A673 (cell line): ENCODE measurements at regions of chr3 and their contacts with region 1.

Region 1: DNA sequence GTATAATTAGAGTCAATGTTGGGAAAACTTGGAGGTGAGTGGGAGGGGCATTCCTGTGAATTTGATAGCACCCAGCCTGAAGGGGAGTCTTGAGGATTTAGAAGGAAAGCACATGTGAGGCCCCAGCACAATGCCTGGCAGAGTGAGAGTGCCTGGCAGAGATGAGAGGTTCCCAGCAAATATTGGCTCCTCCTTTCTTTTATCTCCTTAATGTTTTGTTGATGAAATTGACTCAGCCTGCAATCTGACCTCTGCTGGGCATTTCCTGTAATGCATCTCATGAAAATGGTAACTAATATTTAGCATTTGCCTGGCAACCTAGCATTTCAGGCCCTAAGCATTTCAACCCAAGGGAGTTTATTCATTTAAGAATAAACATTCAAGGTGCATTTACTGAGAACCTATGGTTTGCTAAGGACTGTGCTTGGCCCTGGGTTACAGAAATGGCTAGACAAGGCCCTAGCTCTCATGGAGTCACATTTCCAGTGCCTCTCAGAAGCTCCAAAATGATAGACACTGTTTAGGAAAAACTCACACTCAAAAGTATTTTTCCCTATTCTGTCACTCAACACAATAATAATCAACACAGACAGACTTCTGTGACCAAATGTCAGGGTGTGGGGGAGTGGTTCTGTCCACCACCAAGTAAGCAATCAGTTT is 19.0 kb downstream of the PDHB start:
- DNase-seq: peak; percentile 63
- H3K4me3 ChIP-seq: no peak overlapping the region
- H3K27ac ChIP-seq: no peak overlapping the region
- H3K4me1 ChIP-seq: peaks cover 5% of the 10 kb centered on the region
- H3K27me3 ChIP-seq: no peaks in the 10 kb centered on the region
- CTCF ChIP-seq: peak; percentile 61

Region 2: GRCh38 chr3:58321791-58322190 is 92.9 kb before region 1 on chr3:
- CTCF ChIA-PET with region 1: no interaction called
- POLR2A ChIA-PET with region 1: no interaction called
- intact Hi-C with region 1: loop called (anchors 2 kb)
- DNase-seq: no peak
- H3K4me3 ChIP-seq: no peak overlapping the region
- H3K27ac ChIP-seq: no peak overlapping the region
- H3K4me1 ChIP-seq: no peaks in the 10 kb centered on the region
- H3K27me3 ChIP-seq: no peaks in the 10 kb centered on the region
- CTCF ChIP-seq: no peak